ENCODE measurements at regions of chr4 and their contacts with region 1.

Region 1: GRCh38 chr4:177309522-177310371 is at the start of gene NEIL3:
- DNase-seq: peak; percentile 85 to 92 (median 90)
- ATAC-seq: peak; percentile 94
- H3K4me3 ChIP-seq: peak within 1 kb of the TSS; percentile 78
- H3K4me3 Mint-ChIP-seq: peak within 1 kb of the TSS; percentile 81 to 95 (median 89)
- H3K27ac ChIP-seq: peak within 1 kb of the TSS; percentile 69
- H3K27ac Mint-ChIP-seq: peak within 1 kb of the TSS; percentile 25 to 93 (median 82)
- H3K4me1 ChIP-seq: peaks cover 0 to 13% of the 10 kb centered on the region in 2 donors
- H3K4me1 Mint-ChIP-seq: peaks cover 4 to 56% (median 20%) of the 10 kb centered on the region in 7 donors
- H3K27me3 ChIP-seq: no peaks in the 10 kb centered on the region
- H3K27me3 Mint-ChIP-seq: no peaks in the 10 kb centered on the region
- total RNA-seq, gene NEIL3: 0.37 to 24.7 (median 2.4) TPM in 3 of 5 experiments, not detected in the others

Region 2: DNA sequence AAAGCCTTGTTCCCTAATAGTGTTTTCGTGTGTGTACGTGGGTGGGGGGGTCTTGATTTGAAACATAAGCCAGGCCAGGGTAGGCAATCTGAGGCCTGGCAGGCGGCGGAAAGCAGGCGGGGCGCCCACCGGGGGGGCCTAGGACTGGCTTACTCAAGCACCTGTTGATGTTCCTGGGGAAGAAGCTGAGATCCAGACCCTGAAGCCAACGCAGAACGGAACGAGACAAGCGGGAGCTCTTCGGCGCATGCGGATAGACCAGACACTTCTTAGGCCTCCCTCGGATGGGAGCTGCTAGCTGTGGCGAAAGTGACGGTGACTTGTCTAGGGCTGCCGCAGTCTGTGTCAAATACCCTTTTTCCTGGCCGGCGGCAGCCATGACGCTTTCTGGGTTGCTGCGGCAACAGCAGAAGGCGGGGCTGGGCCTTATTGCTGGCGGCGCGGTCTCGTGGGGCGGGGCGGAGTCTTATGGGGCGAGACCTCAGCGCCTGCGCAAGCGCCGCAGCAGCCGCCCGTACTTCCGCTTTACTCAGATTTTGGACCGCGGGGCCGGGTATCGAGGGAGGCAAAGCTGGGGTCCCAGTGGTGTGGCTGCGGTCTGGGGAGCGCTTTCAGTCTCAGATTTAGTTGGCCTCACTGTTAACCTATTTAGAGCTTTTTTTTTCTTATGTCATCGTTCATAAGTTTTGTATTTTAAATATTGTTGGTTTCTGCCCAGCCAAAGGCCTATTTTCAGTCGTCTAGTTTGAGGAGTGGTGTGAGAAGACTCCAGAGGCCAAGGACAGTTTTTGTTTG is 1114.4 kb before region 1 on chr4 and contains the start of gene SPATA4:
- CTCF ChIA-PET with region 1: no interaction called
- POLR2A ChIA-PET with region 1: no interaction called
- intact Hi-C with region 1: loop called (anchors 5 to 10 kb)
- DNase-seq: peak; percentile 85 to 92 (median 91)
- ATAC-seq: peak; percentile 99
- H3K4me3 ChIP-seq: peak within 1 kb of the TSS; percentile 83
- H3K4me3 Mint-ChIP-seq: peak within 1 kb of the TSS; percentile 83 to 94 (median 90)
- H3K27ac ChIP-seq: peak within 1 kb of the TSS; percentile 65
- H3K27ac Mint-ChIP-seq: peak within 1 kb of the TSS; percentile 75 to 96 (median 93)
- H3K4me1 ChIP-seq: peaks cover 5 to 9% of the 10 kb centered on the region in 2 donors
- H3K4me1 Mint-ChIP-seq: peaks cover 3 to 12% (median 10%) of the 10 kb centered on the region in 7 donors
- H3K27me3 ChIP-seq: peaks cover 0 to 12% of the 10 kb centered on the region in 2 donors
- H3K27me3 Mint-ChIP-seq: peaks cover 4 to 43% (median 16%) of the 10 kb centered on the region in 5 donors
- total RNA-seq, gene SPATA4: not detected

Region 3: GRCh38 chr4:176902710-176903323 is 406.9 kb before region 1 on chr4:
- CTCF ChIA-PET with region 1: no interaction called
- POLR2A ChIA-PET with region 1: no interaction called
- intact Hi-C with region 1: loop called in 1 of 2 experiments (anchors 10 kb)
- DNase-seq: no peak
- ATAC-seq: no peak
- H3K4me3 ChIP-seq: no peak overlapping the region
- H3K4me3 Mint-ChIP-seq: peak overlapping the region in 1 of 10 donors; percentile 45
- H3K27ac ChIP-seq: no peak overlapping the region
- H3K27ac Mint-ChIP-seq: peak overlapping the region in 1 of 9 donors; percentile 31
- H3K4me1 ChIP-seq: no peaks in the 10 kb centered on the region
- H3K4me1 Mint-ChIP-seq: peaks cover 0 to 17% (median 0%) of the 10 kb centered on the region in 7 donors
- H3K27me3 ChIP-seq: no peaks in the 10 kb centered on the region
- H3K27me3 Mint-ChIP-seq: peaks cover 0 to 6% (median 0%) of the 10 kb centered on the region in 5 donors

Region 4: GRCh38 chr4:177320721-177321120 is 11.0 kb after region 1 on chr4:
- CTCF ChIA-PET with region 1: interaction called, 3 read pairs
- POLR2A ChIA-PET with region 1: no interaction called
- intact Hi-C with region 1: loop called (anchors 1 kb)
- DNase-seq: no peak
- ATAC-seq: no peak
- H3K4me3 ChIP-seq: no peak overlapping the region
- H3K4me3 Mint-ChIP-seq: peak overlapping the region in 3 of 10 donors; percentile 49 to 65 (median 53)
- H3K27ac ChIP-seq: no peak overlapping the region
- H3K27ac Mint-ChIP-seq: peak overlapping the region in 3 of 9 donors; percentile 33 to 81 (median 53)
- H3K4me1 ChIP-seq: peaks cover 6 to 12% of the 10 kb centered on the region in 2 donors
- H3K4me1 Mint-ChIP-seq: peaks cover 12 to 83% (median 37%) of the 10 kb centered on the region in 7 donors
- H3K27me3 ChIP-seq: no peaks in the 10 kb centered on the region
- H3K27me3 Mint-ChIP-seq: no peaks in the 10 kb centered on the region

Region 5: DNA sequence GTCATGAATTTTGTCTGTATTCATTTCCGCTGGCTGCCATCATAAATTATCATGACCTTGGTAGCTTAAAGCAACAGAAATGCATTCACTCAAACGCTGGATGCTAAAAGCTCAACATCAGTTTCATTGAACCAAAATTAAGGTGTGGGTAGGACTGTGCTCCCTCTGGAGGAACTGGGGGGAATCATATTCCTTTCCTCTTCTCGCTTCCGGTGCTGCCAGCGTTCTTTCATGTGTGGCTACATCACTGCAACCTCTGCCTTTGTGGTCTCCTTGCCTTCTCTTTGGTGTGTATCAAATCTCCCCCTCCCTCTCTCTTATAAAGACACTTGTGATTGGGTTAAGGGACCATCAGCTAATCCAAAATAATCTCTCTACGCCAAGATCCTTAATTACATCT is 39.4 kb after region 1 on chr4:
- CTCF ChIA-PET with region 1: no interaction called
- POLR2A ChIA-PET with region 1: no interaction called
- intact Hi-C with region 1: no loop called
- DNase-seq: no peak
- ATAC-seq: no peak
- H3K4me3 ChIP-seq: no peak overlapping the region
- H3K4me3 Mint-ChIP-seq: no peak overlapping the region
- H3K27ac ChIP-seq: no peak overlapping the region
- H3K27ac Mint-ChIP-seq: no peak overlapping the region
- H3K4me1 ChIP-seq: no peaks in the 10 kb centered on the region
- H3K4me1 Mint-ChIP-seq: peaks cover 0 to 7% (median 0%) of the 10 kb centered on the region in 7 donors
- H3K27me3 ChIP-seq: no peaks in the 10 kb centered on the region
- H3K27me3 Mint-ChIP-seq: no peaks in the 10 kb centered on the region

Region 6: GRCh38 chr4:177393236-177393635 is 83.5 kb after region 1 on chr4:
- CTCF ChIA-PET with region 1: no interaction called
- POLR2A ChIA-PET with region 1: no interaction called
- intact Hi-C with region 1: loop called in 1 of 2 experiments (anchors 5 kb)
- DNase-seq: peak in 7 of 9 donors; percentile 23 to 64 (median 55)
- ATAC-seq: peak; percentile 86
- H3K4me3 ChIP-seq: no peak overlapping the region
- H3K4me3 Mint-ChIP-seq: peak overlapping the region in 9 of 10 donors; percentile 53 to 85 (median 66)
- H3K27ac ChIP-seq: peak overlapping the region; percentile 22
- H3K27ac Mint-ChIP-seq: peak overlapping the region; percentile 16 to 98 (median 86)
- H3K4me1 ChIP-seq: peaks cover 0 to 16% of the 10 kb centered on the region in 2 donors
- H3K4me1 Mint-ChIP-seq: peaks cover 12 to 45% (median 32%) of the 10 kb centered on the region in 7 donors
- H3K27me3 ChIP-seq: no peaks in the 10 kb centered on the region
- H3K27me3 Mint-ChIP-seq: peaks cover 0 to 16% (median 0%) of the 10 kb centered on the region in 5 donors

Measured in naive thymus-derived CD4-positive, alpha-beta T cell (primary cell).